CD4-positive, alpha-beta memory T cell (primary cell): ENCODE measurements at regions of chr17 and their contacts with region 1.

Region 1: GRCh38 chr17:78250891-78251794 is 19.7 kb downstream of the TMEM235 start:
- DNase-seq: peak; percentile 75 to 85 (median 80)
- H3K4me3 ChIP-seq: peak overlapping the region; percentile 54 to 65
- H3K4me3 Mint-ChIP-seq: peak overlapping the region; percentile 82 to 94 (median 88)
- H3K27ac ChIP-seq: peak overlapping the region; percentile 61
- H3K27ac Mint-ChIP-seq: peak overlapping the region; percentile 96 to 99 (median 98)
- H3K4me1 ChIP-seq: peaks cover 56% of the 10 kb centered on the region
- H3K4me1 Mint-ChIP-seq: peaks cover 31 to 58% (median 44%) of the 10 kb centered on the region in 4 donors
- H3K27me3 ChIP-seq: no peaks in the 10 kb centered on the region
- H3K27me3 Mint-ChIP-seq: peaks cover 0 to 1% of the 10 kb centered on the region in 2 donors

Region 2: GRCh38 chr17:76852843-76853242 is 1398.3 kb before region 1 on chr17:
- CTCF ChIA-PET with region 1: no interaction called
- POLR2A ChIA-PET with region 1: no interaction called
- intact Hi-C with region 1: no loop called
- DNase-seq: no peak
- H3K4me3 ChIP-seq: no peak overlapping the region
- H3K4me3 Mint-ChIP-seq: no peak overlapping the region
- H3K27ac ChIP-seq: no peak overlapping the region
- H3K27ac Mint-ChIP-seq: no peak overlapping the region
- H3K4me1 ChIP-seq: no peaks in the 10 kb centered on the region
- H3K4me1 Mint-ChIP-seq: no peaks in the 10 kb centered on the region
- H3K27me3 ChIP-seq: no peaks in the 10 kb centered on the region
- H3K27me3 Mint-ChIP-seq: peaks cover 18 to 25% of the 10 kb centered on the region in 2 donors

Region 3: GRCh38 chr17:78019367-78019975 is 231.7 kb before region 1 on chr17:
- CTCF ChIA-PET with region 1: interaction called, 36 read pairs
- POLR2A ChIA-PET with region 1: interaction called, 4 read pairs
- intact Hi-C with region 1: loop called (anchors 1 kb)
- DNase-seq: peak in 4 of 5 donors; percentile 26 to 38 (median 29)
- H3K4me3 ChIP-seq: no peak overlapping the region
- H3K4me3 Mint-ChIP-seq: peak overlapping the region in 2 of 8 donors; percentile 21 to 71
- H3K27ac ChIP-seq: peak overlapping the region; percentile 12
- H3K27ac Mint-ChIP-seq: peak overlapping the region in 5 of 7 donors; percentile 25 to 70 (median 33)
- H3K4me1 ChIP-seq: peaks cover 23% of the 10 kb centered on the region
- H3K4me1 Mint-ChIP-seq: peaks cover 20 to 31% (median 24%) of the 10 kb centered on the region in 4 donors
- H3K27me3 ChIP-seq: no peaks in the 10 kb centered on the region
- H3K27me3 Mint-ChIP-seq: no peaks in the 10 kb centered on the region

Region 4: DNA sequence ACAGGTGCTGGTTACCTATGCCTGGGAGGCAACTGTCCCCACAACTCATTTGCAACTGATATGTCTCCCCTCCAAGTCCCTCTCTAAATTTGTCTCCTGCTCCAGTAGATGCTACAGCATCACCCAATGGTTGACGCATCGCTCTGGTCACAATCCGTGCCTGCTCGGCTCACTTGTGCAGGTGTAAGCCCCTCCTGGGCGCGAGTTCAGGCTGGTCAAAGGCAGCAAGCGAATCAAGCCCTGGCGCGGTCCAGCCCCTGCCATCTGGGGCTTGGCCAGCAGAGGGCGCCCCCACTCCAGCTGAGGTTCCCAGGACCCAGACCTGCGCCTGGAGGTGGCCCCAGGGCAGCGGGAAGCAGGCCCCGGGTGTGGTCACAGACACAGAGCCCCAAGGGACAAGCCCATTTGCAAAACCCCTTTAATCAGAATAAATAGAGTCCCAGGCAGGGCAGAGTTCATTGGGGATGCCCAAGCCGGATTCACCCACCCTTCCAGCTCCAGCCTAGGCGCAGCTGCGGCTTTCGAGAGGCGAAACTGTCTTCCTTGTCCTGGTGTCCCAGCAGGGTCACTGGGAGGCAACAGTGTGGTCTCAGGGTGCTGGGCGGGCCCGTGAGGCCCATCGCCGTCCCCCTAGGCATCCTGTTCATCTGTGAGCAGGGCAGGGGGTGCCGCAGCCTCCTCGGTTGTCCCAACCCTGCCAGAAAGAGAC is 138.5 kb before region 1 on chr17:
- CTCF ChIA-PET with region 1: interaction called, 5 read pairs
- POLR2A ChIA-PET with region 1: interaction called, 3 read pairs
- intact Hi-C with region 1: loop called (anchors 1 kb)
- DNase-seq: peak; percentile 68 to 79 (median 72)
- H3K4me3 ChIP-seq: no peak overlapping the region
- H3K4me3 Mint-ChIP-seq: peak overlapping the region in 4 of 8 donors; percentile 43 to 59 (median 53)
- H3K27ac ChIP-seq: peak overlapping the region; percentile 35
- H3K27ac Mint-ChIP-seq: peak overlapping the region; percentile 81 to 96 (median 93)
- H3K4me1 ChIP-seq: peaks cover 47% of the 10 kb centered on the region
- H3K4me1 Mint-ChIP-seq: peaks cover 25 to 51% (median 36%) of the 10 kb centered on the region in 4 donors
- H3K27me3 ChIP-seq: no peaks in the 10 kb centered on the region
- H3K27me3 Mint-ChIP-seq: no peaks in the 10 kb centered on the region

Region 5: DNA sequence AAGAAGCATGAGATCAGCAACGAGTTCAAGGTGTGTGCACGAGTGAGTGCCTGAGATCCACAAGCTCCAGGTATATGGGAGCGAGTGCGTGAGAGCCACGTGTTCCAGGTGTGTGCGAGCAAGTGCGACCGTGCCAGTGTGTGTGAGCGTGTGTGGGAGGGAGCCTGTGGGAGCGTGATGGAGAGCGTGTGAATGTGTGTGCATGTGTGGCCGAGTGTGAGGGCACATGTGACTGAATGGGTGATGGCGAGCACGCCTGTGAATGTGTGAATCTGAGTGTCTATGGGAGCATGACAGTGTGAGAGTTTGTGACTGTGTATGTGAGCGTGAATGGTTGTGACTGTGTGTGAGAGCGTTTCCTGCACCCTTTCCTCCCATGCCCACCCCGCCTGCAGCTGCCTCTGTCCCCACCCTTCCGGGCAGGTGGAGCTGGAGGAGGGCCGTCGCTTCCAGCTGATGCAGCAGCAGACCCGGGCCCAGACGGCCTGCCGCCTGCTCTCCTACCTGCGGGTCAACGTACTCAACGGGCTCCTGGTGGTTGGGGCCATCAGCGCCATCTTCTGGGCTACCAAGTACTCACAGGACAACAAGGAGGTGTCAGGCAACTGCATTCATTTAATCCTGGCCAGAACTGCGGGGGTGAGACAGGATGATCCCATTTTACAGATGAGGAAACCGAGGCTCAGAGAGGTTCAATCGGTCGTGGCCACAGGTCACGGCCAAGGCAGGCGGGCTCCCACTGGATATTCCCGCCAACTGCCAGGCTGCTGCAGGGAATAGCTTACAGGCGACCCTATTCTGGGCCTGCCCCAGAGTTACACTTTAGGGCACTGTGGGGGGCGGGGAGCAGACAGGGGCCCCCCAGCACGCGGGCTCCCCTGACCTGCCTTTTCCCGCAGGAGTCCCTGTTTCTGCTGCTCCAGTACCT is 116.9 kb before region 1 on chr17:
- CTCF ChIA-PET with region 1: interaction called, 6 read pairs
- POLR2A ChIA-PET with region 1: interaction called, 28 read pairs
- intact Hi-C with region 1: loop called (anchors 5 kb)
- DNase-seq: peak; percentile 87 to 90 (median 89)
- H3K4me3 ChIP-seq: peak overlapping the region; percentile 93 to 97
- H3K4me3 Mint-ChIP-seq: peak overlapping the region; percentile 87 to 99 (median 88)
- H3K27ac ChIP-seq: peak overlapping the region; percentile 81
- H3K27ac Mint-ChIP-seq: peak overlapping the region; percentile 83 to 98 (median 93)
- H3K4me1 ChIP-seq: peaks cover 80% of the 10 kb centered on the region
- H3K4me1 Mint-ChIP-seq: peaks cover 34 to 87% (median 59%) of the 10 kb centered on the region in 4 donors
- H3K27me3 ChIP-seq: no peaks in the 10 kb centered on the region
- H3K27me3 Mint-ChIP-seq: no peaks in the 10 kb centered on the region

Region 6: GRCh38 chr17:78144736-78145641 is 106.2 kb before region 1 on chr17:
- CTCF ChIA-PET with region 1: no interaction called
- POLR2A ChIA-PET with region 1: no interaction called
- intact Hi-C with region 1: no loop called
- DNase-seq: no peak
- H3K4me3 ChIP-seq: no peak overlapping the region
- H3K4me3 Mint-ChIP-seq: no peak overlapping the region
- H3K27ac ChIP-seq: no peak overlapping the region
- H3K27ac Mint-ChIP-seq: no peak overlapping the region
- H3K4me1 ChIP-seq: peaks cover 55% of the 10 kb centered on the region
- H3K4me1 Mint-ChIP-seq: peaks cover 12 to 49% (median 28%) of the 10 kb centered on the region in 4 donors
- H3K27me3 ChIP-seq: no peaks in the 10 kb centered on the region
- H3K27me3 Mint-ChIP-seq: no peaks in the 10 kb centered on the region

Region 7: DNA sequence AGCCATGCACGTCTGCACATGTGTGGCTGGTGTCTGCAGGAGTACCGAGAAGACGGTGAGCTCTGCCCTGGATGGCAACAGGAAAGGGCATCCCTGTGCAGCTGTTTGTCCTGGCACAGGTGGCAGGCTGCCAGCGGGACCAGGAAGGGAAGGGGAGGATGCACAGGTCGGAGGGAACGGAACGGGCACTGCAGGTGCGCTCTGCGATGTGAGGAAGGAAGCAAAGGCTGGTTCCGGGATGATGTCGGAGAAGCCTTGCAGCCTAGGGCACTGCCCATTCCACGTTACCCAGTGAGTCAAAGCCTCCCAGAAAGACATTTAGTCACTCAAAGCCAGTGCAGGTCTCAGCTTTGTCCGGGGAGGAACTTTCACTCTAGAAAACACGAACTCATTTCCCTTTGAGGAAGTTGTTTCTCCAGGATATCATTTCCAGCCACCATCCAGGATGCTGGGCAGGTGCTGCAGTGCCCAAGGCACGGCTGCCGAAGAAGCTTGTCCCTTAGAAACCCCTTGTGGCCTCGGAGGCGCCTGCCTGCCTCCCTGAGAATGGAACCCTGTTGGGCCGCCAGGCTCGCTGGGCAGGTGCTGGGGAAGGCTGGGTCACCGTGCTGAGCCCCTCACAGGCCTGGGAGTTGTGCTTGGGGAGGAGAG is 24.3 kb before region 1 on chr17:
- CTCF ChIA-PET with region 1: interaction called, 12 read pairs
- POLR2A ChIA-PET with region 1: no interaction called
- intact Hi-C with region 1: no loop called
- DNase-seq: no peak
- H3K4me3 ChIP-seq: no peak overlapping the region
- H3K4me3 Mint-ChIP-seq: peak overlapping the region in 2 of 8 donors; percentile 36 to 48
- H3K27ac ChIP-seq: no peak overlapping the region
- H3K27ac Mint-ChIP-seq: no peak overlapping the region
- H3K4me1 ChIP-seq: no peaks in the 10 kb centered on the region
- H3K4me1 Mint-ChIP-seq: peaks cover 0 to 11% (median 1%) of the 10 kb centered on the region in 4 donors
- H3K27me3 ChIP-seq: peaks cover 3% of the 10 kb centered on the region
- H3K27me3 Mint-ChIP-seq: peaks cover 4 to 11% of the 10 kb centered on the region in 2 donors

Region 8: DNA sequence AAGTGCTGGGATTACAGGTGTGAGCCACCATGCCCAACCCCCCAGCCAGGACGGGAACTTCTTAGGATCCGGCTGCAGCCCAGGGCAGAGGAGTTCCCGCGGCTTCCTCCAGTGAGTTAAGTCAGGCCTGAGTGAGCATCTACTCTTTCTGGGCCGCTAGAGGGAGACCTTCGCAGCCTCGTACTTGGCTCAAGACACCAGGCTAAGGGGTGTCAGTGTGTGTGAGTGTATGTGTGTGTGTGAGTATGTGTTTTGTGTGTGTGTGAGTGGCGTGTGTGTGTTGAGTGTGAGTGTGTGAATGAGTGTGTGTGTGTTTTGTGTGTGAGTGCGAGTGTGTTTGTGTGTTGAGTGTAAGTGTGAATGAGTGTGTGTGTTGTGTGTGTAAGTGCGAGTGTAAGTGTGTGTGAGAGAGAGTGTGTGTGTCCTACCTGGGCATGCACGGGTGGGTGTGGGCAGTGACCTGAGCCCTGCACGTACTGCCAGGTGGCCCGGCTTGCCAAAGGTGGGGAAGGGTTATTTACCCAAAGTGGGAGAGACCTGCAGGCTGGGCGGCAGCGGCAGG is 38.7 kb after region 1 on chr17:
- CTCF ChIA-PET with region 1: interaction called, 20 read pairs
- POLR2A ChIA-PET with region 1: interaction called, 4 read pairs
- intact Hi-C with region 1: loop called (anchors 1 kb)
- DNase-seq: peak; percentile 72 to 78 (median 74)
- H3K4me3 ChIP-seq: no peak overlapping the region
- H3K4me3 Mint-ChIP-seq: no peak overlapping the region
- H3K27ac ChIP-seq: no peak overlapping the region
- H3K27ac Mint-ChIP-seq: no peak overlapping the region
- H3K4me1 ChIP-seq: peaks cover 8% of the 10 kb centered on the region
- H3K4me1 Mint-ChIP-seq: peaks cover 0 to 7% (median 1%) of the 10 kb centered on the region in 4 donors
- H3K27me3 ChIP-seq: no peaks in the 10 kb centered on the region
- H3K27me3 Mint-ChIP-seq: no peaks in the 10 kb centered on the region

Region 9: GRCh38 chr17:78360371-78361224 is 109.5 kb after region 1 on chr17:
- CTCF ChIA-PET with region 1: interaction called, 10 read pairs
- POLR2A ChIA-PET with region 1: interaction called, 13 read pairs
- intact Hi-C with region 1: loop called (anchors 1 kb)
- DNase-seq: peak; percentile 80 to 87 (median 83)
- H3K4me3 ChIP-seq: peak overlapping the region; percentile 61 to 62
- H3K4me3 Mint-ChIP-seq: peak overlapping the region; percentile 85 to 98 (median 88)
- H3K27ac ChIP-seq: peak overlapping the region; percentile 61
- H3K27ac Mint-ChIP-seq: peak overlapping the region; percentile 88 to 96 (median 95)
- H3K4me1 ChIP-seq: peaks cover 32% of the 10 kb centered on the region
- H3K4me1 Mint-ChIP-seq: peaks cover 15 to 41% (median 26%) of the 10 kb centered on the region in 4 donors
- H3K27me3 ChIP-seq: no peaks in the 10 kb centered on the region
- H3K27me3 Mint-ChIP-seq: no peaks in the 10 kb centered on the region